Aorta (tissue), 5 donors: ENCODE measurements at regions of chr21 and their contacts with region 1.

Region 1: GRCh38 chr21:28754127-28754611 is 238.5 kb downstream of the LTN1 start:
- DNase-seq: peak; percentile 65 to 68
- ATAC-seq: peak; percentile 81
- H3K4me3 ChIP-seq: no peak overlapping the region
- H3K27ac ChIP-seq: peak overlapping the region in 1 of 2 donors; percentile 95
- H3K4me1 ChIP-seq: peaks cover 10 to 12% of the 10 kb centered on the region in 2 donors
- H3K27me3 ChIP-seq: no peaks in the 10 kb centered on the region

Region 2: GRCh38 chr21:26788790-26789189 is 1965.4 kb before region 1 on chr21:
- intact Hi-C with region 1: loop called in 1 of 2 experiments (anchors 10 kb)
- DNase-seq: peak in 1 of 2 donors; percentile 78
- ATAC-seq: peak; percentile 85
- H3K4me3 ChIP-seq: no peak overlapping the region
- H3K27ac ChIP-seq: peak overlapping the region in 1 of 2 donors; percentile 71
- H3K4me1 ChIP-seq: peaks cover 0 to 12% of the 10 kb centered on the region in 2 donors
- H3K27me3 ChIP-seq: no peaks in the 10 kb centered on the region

Region 3: DNA sequence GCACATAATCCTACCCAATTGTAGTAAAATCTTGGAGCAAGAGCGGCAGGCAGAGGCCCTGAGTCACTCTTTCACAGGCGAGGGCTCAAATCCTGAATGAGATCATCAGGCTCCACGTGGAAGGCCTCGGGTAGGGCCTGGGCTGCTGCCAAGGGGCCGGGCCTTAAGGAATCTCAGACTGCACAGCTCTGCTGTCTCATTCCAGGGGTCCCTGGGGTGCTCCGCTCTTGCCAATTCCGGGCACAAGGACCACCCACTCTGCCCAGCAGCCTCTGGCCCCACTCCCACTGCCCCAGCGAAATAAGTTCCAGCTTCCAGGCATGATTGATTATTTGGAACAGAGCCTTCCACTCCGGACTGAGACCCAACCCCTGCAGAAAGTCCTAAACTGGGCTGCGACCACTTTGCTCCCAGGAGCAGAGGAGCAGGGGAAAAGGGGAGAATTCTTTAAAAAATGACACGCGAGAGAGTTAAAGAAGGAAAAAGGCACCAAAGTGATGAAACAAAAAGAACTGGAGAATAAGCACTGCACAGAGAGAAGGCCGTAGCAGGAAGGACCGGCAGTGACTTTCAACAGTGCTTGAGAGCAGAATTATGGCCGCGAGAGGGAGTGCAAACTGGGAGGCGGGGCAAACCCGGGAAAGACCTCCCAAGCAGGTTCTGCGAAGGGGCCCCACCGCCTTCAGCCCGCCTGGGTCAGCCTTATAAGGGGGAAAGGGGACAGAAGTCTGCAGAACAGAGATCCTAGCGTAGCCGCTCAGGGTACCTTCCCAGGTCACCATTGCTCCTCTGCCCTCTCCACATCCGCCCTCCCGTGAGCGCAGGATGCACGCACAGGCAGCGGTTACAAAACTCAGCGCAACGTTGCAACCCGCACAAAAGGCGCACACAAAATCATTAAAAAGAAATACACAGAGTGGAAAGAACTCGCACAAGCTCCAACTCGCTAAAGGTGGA is 1910.9 kb before region 1 on chr21:
- intact Hi-C with region 1: loop called in 1 of 2 experiments (anchors 5 kb)
- DNase-seq: peak; percentile 95 to 97
- ATAC-seq: peak; percentile 75
- H3K4me3 ChIP-seq: peak overlapping the region; percentile 88 to 93
- H3K27ac ChIP-seq: peak overlapping the region in 1 of 2 donors; percentile 87
- H3K4me1 ChIP-seq: no peaks in the 10 kb centered on the region
- H3K27me3 ChIP-seq: no peaks in the 10 kb centered on the region

Region 4: GRCh38 chr21:28805885-28806284 is 51.7 kb after region 1 on chr21:
- intact Hi-C with region 1: loop called in 1 of 2 experiments (anchors 5 kb)
- DNase-seq: no peak
- ATAC-seq: peak; percentile 80
- H3K4me3 ChIP-seq: peak overlapping the region in 1 of 2 donors; percentile 34
- H3K27ac ChIP-seq: peak overlapping the region; percentile 71 to 94
- H3K4me1 ChIP-seq: peaks cover 2 to 5% of the 10 kb centered on the region in 2 donors
- H3K27me3 ChIP-seq: no peaks in the 10 kb centered on the region

Region 5: DNA sequence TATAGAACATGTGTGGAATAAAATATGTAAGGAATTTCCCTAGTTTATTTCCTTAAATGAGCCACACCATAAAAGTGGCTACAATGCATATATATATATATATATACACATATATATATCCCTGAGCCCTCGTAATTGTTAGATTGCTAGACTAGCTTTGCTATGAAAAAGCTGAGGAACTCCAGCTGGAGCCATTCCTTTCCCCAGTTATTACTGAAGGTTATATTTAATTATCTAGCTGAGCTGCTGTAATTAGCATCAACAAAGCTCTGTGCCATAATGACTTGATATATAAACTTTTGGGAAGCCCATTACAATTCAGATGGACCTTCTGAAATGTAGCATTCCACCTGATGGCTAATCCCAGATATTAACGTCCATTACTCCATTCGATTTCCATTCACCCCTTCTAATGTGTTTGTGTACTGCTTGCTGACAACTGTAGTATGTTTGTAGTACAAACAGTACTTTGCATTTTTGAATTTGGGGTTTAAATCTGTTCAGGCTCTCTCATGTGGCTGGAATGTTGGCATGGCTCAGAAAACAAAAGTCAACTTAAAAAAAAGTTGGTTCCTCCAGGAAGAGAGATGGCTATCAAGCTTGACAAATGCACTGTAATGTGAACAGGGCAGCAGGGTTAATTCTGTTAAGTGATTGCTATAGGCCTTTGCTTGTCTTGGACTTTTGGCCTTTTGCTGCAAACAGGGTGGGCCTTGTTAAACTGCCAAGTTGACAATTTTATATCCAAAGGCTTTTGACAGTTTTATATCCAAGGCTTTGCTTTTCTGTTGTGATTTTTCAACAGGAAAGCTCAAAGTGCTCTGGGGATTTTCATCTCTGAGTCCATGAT is 68.5 kb after region 1 on chr21:
- intact Hi-C with region 1: no loop called
- DNase-seq: no peak
- ATAC-seq: peak; percentile 77
- H3K4me3 ChIP-seq: no peak overlapping the region
- H3K27ac ChIP-seq: peak overlapping the region; percentile 79 to 94
- H3K4me1 ChIP-seq: peaks cover 2 to 6% of the 10 kb centered on the region in 2 donors
- H3K27me3 ChIP-seq: no peaks in the 10 kb centered on the region